Mammary epithelial cell (primary cell): ENCODE measurements at regions of chr15 and their contacts with region 1.

Region 1: DNA sequence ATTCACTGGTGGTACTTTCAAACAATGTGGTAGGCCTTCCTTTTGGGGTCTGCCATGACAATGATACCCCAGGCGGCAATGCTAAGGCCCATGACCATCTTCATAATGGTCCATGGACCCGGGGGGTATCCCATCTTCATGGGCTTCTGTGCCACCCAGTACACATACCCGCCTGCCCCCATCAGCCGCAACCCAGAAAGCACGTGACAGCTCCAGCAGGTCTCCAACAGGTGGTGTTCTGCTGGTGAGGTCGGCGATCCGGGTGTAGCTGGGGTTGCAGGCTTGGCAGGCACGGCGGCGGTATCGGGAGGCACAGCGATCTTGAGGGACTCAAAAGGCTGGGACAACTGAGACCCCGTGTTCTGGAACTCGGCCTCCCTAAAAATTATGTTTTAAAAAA is 214.5 kb downstream of the SNRPN start:
- DNase-seq: no peak
- H3K4me3 ChIP-seq: no peak overlapping the region
- H3K27ac ChIP-seq: no peak overlapping the region
- H3K4me1 ChIP-seq: no peaks in the 10 kb centered on the region
- H3K27me3 ChIP-seq: no peaks in the 10 kb centered on the region
- CTCF ChIP-seq: no peak

Region 2: GRCh38 chr15:25230442-25230841 is 61.1 kb after region 1 on chr15:
- CTCF ChIA-PET with region 1: no interaction called
- dilution Hi-C with region 1: loop called (anchors 5 kb)
- in situ Hi-C with region 1: no loop called
- intact Hi-C with region 1: no loop called
- DNase-seq: no peak
- H3K4me3 ChIP-seq: no peak overlapping the region
- H3K27ac ChIP-seq: no peak overlapping the region
- H3K4me1 ChIP-seq: no peaks in the 10 kb centered on the region
- H3K27me3 ChIP-seq: no peaks in the 10 kb centered on the region
- CTCF ChIP-seq: no peak

Region 3: GRCh38 chr15:25543196-25543595 is 373.9 kb after region 1 on chr15:
- CTCF ChIA-PET with region 1: no interaction called
- dilution Hi-C with region 1: no loop called
- in situ Hi-C with region 1: no loop called
- intact Hi-C with region 1: no loop called
- DNase-seq: no peak
- H3K4me3 ChIP-seq: no peak overlapping the region
- H3K27ac ChIP-seq: no peak overlapping the region
- H3K4me1 ChIP-seq: no peaks in the 10 kb centered on the region
- H3K27me3 ChIP-seq: no peaks in the 10 kb centered on the region
- CTCF ChIP-seq: no peak